ENCODE measurements at regions of chr1 and their contacts with region 1.

Region 1: DNA sequence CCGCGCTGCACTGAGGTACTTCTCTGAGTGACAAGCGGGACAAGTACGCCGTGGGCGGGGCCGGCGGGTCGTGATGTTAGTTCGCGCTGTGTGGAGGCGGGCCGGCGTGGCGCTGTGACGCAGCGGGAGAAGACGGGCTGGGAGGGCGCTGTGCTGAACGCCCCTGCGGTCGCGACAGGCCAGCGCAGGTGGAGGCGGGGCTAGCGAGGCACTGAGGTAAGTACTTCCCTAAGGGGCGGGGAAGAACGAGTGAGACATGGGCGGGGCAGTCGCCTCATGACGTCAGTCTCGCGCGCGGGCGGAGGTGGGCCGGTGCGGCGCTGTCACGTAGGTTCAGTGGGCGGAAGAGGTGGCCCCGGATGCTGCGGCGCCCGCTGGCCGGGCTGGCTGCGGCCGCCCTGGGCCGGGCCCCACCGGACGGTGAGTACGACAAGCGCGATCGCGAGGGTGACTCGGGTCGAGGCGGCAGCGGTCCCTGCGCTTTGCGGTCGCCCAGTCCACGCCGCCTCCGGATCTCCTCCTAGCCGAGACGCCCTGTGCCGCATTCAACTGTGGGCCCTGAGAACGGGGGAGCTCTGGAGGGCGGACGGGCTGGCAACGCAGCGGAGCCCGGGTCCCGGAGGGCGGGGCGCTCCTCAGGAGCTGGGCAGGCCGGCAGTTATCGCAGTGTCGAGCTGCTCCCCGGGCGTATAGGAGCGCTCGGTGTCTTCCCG is at the start of gene GUK1:
- DNase-seq: peak; percentile 99 to 100
- H3K4me3 ChIP-seq: peak within 1 kb of the TSS; percentile 80 to 93 (median 88)
- H3K27ac ChIP-seq: peak within 1 kb of the TSS; percentile 85; the same call in 1 of the 2 replicates
- H3K4me1 ChIP-seq: peaks cover 0 to 10% (median 6%) of the 10 kb centered on the region in 4 experiments; a peak in 5 of 7 replicates
- H3K27me3 ChIP-seq: peaks cover 0 to 17% (median 1%) of the 10 kb centered on the region in 4 experiments; a peak in 3 of 7 replicates
- CTCF ChIP-seq: peak in 1 of 3 experiments; percentile 17; a peak in 2 of 4 replicates
- EP300 ChIP-seq: no peak
- POLR2A ChIP-seq: peak in 1 of 2 experiments; percentile 90; a peak in 2 of 3 replicates
- RAD21 ChIP-seq: no peak
- total RNA-seq, gene GUK1: 68.5 TPM in 2 replicates

Region 2: GRCh38 chr1:228118040-228118439 is 22.1 kb before region 1 on chr1:
- CTCF ChIA-PET with region 1: no interaction called
- POLR2A ChIA-PET with region 1: no interaction called
- DNase-seq: no peak
- H3K4me3 ChIP-seq: no peak overlapping the region
- H3K27ac ChIP-seq: no peak overlapping the region
- H3K4me1 ChIP-seq: no peaks in the 10 kb centered on the region
- H3K27me3 ChIP-seq: no peaks in the 10 kb centered on the region; a peak in 2 of 7 replicates
- CTCF ChIP-seq: no peak
- EP300 ChIP-seq: no peak
- POLR2A ChIP-seq: no peak
- RAD21 ChIP-seq: no peak

Region 3: DNA sequence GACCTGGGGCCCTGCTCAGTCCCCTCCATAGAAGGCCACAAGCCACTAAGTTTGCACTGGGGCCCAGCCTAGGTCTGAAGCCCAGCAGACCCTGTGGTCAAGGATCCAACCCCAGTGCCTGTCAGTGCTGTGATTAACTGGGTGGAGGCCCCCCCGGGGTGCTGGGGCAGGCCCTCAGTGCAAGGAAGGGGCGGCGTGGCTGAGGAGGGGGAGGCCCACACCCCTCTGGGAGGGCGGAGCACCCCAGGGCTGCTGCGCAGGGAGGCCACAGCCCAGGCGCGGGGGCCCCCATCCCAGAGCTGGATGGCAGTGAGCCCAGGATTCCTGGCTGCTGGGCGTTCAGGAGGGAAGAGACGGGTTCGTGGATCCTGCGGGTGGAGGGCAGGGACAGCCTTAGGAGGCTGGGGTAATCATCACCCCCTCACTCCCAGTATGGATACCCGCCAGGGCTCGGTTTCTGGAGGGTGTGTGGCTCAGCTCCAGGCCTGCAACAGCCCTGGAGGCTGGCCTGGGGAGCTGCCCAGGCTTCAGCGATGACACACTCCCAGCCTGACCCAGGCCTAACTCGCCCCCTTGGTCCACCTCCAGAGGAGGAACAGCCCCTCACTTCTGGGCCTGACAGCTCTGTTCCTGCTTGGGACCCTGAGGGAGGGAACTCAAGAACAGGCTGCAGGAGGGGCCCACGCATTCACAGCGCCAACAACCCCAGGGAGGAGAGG is 10.5 kb after region 1 on chr1:
- CTCF ChIA-PET with region 1: interaction called, 4 read pairs
- POLR2A ChIA-PET with region 1: interaction called, 18 read pairs
- DNase-seq: peak in 1 of 2 experiments; percentile 42
- H3K4me3 ChIP-seq: no peak overlapping the region
- H3K27ac ChIP-seq: no peak overlapping the region
- H3K4me1 ChIP-seq: peaks cover 0 to 10% (median 4%) of the 10 kb centered on the region in 4 experiments; a peak in 1 of 7 replicates
- H3K27me3 ChIP-seq: 0 out of 7 replicates have a peak, but pooled peaks cover 0 to 5% (median 0%) of the 10 kb centered on the region in 4 experiments
- CTCF ChIP-seq: no peak
- EP300 ChIP-seq: no peak
- POLR2A ChIP-seq: no peak
- RAD21 ChIP-seq: no peak

Measured in H1 (cell line).